IMR-90 (cell line): ENCODE measurements at regions of chr3 and their contacts with region 1.

Region 1: GRCh38 chr3:139329345-139329850 is 14.4 kb upstream of the MRPS22 start:
- DNase-seq: peak; percentile 63
- ATAC-seq: peak; percentile 99
- H3K4me3 ChIP-seq: no peak overlapping the region
- H3K27ac ChIP-seq: no peak overlapping the region
- H3K4me1 ChIP-seq: peaks cover 2% of the 10 kb centered on the region; the same call in 1 of the 2 replicates
- H3K27me3 ChIP-seq: peaks cover 18% of the 10 kb centered on the region
- CTCF ChIP-seq: peak; percentile 100
- POLR2A ChIP-seq: peak; percentile 62; the same call in 1 of the 2 replicates
- RAD21 ChIP-seq: peak; percentile 100

Region 2: DNA sequence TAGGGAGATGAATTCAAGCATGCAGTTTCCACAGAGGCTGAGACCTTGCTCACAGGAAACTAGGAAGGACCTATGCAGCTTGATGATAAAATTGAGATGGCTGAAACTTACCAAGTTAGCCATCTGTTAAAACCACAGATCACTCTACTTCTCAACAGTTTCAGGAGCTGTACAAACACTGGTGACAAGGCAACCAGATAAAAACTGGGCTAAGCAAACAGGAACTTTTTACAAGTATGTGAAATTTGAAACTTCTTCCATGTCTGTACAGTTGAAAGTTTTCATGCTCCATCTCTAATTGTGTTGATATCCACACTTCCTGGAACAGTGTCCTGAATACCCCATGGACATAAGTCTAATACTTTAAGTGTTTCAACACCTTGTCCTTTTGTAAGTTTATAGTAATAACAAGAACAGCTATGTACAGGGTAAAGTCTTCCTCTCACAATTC is 642.6 kb before region 1 on chr3:
- CTCF ChIA-PET with region 1: no interaction called
- POLR2A ChIA-PET with region 1: no interaction called
- dilution Hi-C with region 1: no loop called
- in situ Hi-C with region 1: loop called (anchors 25 kb)
- intact Hi-C with region 1: loop called (anchors 10 kb)
- DNase-seq: peak; percentile 89
- ATAC-seq: peak; percentile 88
- H3K4me3 ChIP-seq: no peak overlapping the region
- H3K27ac ChIP-seq: no peak overlapping the region
- H3K4me1 ChIP-seq: peaks cover 4% of the 10 kb centered on the region
- H3K27me3 ChIP-seq: no peaks in the 10 kb centered on the region
- CTCF ChIP-seq: no peak
- POLR2A ChIP-seq: no peak
- RAD21 ChIP-seq: no peak

Region 3: GRCh38 chr3:138694287-138695007 is 635.0 kb before region 1 on chr3:
- CTCF ChIA-PET with region 1: no interaction called
- POLR2A ChIA-PET with region 1: no interaction called
- dilution Hi-C with region 1: no loop called
- in situ Hi-C with region 1: loop called (anchors 25 kb)
- intact Hi-C with region 1: loop called (anchors 10 kb)
- DNase-seq: peak; percentile 99
- ATAC-seq: peak; percentile 96
- H3K4me3 ChIP-seq: no peak overlapping the region
- H3K27ac ChIP-seq: peak overlapping the region; percentile 61
- H3K4me1 ChIP-seq: peaks cover 4% of the 10 kb centered on the region
- H3K27me3 ChIP-seq: no peaks in the 10 kb centered on the region
- CTCF ChIP-seq: no peak
- POLR2A ChIP-seq: no peak
- RAD21 ChIP-seq: no peak

Region 4: DNA sequence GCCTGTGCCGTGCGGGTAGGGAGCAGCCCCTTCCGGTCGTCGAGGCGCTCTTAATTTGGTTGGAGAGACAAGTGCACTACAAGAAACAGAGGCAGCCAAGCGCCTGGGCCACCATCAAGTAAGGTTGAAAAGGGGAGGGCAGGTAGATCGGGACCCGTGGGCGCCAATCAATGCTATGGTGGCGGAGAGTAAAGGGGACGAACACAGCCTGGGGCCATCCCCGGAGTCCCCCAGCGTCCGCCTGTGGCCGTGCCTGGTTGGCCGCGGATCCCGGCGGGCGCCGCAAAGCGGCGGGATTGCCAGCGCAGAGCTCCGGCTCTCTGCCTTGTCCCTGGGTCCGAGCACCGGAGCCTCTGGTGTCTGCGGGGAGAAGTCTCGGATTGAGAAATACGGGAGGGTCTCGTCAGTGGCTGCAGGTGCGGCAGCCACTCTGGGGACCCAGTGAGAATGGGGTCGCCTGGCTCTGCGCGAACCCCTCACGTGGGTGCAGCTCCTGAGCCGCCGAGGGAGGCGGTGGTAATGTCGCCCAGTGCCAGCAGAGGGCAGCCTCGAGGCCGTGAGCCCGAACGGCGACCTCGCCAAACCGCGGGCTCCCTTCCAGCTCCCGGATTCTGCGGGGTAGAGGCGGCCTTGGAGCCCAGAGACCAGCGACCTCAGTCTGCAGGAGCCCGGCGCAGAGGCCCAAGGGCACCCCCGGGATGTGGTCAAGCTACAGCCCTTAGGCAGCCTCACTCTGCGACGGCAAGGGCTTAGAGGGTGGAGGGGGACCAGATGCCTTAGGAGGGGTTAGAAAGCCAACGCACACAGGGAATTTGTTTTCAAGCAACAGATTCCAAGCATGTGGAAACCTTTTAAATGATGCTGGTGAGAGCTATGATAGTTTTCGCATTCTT is 393.3 kb before region 1 on chr3:
- CTCF ChIA-PET with region 1: interaction called, 5 read pairs
- POLR2A ChIA-PET with region 1: no interaction called
- dilution Hi-C with region 1: no loop called
- in situ Hi-C with region 1: loop called (anchors 5 kb)
- intact Hi-C with region 1: loop called (anchors 1 kb)
- DNase-seq: peak; percentile 29
- ATAC-seq: peak; percentile 93
- H3K4me3 ChIP-seq: peak overlapping the region; percentile 41
- H3K27ac ChIP-seq: no peak overlapping the region
- H3K4me1 ChIP-seq: peaks cover 4% of the 10 kb centered on the region; the same call in 1 of the 2 replicates
- H3K27me3 ChIP-seq: peaks cover 79% of the 10 kb centered on the region
- CTCF ChIP-seq: peak; percentile 74
- POLR2A ChIP-seq: no peak
- RAD21 ChIP-seq: peak; percentile 55

Region 5: DNA sequence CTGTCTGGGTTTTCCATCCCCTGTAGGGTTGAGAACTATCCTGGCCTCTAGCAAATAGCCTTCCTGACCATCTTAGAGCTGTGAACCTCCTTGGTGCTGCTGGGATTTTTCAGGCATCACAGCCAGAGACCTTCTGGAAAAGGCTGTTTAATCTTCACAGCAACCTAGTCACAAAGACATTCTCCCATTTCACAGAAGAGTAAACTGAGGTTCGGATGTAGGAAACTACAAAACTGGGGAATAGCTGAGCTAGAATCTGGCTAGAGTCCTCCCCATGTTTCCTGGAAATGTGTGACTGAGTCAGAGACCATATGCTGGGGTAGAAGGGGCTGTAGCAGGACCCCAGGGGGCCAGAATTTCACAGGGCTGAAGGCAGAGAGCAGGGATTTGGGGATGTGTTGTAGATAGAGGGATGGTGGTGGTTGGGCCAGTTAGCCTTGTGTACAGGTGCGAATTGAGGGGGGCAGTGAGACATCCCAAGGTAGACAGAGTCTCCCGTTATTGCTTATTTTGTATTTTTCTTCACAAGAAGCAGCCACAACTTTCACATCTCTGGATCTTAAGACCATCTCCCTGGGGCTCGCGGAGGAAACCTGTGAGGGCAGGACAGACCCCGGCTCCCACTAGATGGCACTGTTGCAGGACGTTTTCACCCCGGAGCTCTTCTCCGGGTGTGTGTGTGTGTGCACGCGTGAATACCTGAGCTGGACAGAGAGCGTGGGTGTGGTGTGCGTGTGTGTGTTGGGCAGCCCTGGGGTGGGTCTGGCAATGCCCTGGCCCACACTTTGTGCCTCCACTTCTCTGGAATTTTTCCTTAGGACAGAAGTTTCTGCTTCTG is 217.8 kb before region 1 on chr3:
- CTCF ChIA-PET with region 1: interaction called, 45 read pairs
- POLR2A ChIA-PET with region 1: no interaction called
- dilution Hi-C with region 1: no loop called
- in situ Hi-C with region 1: loop called (anchors 5 kb)
- intact Hi-C with region 1: loop called (anchors 2 kb)
- DNase-seq: peak; percentile 55
- ATAC-seq: peak; percentile 93
- H3K4me3 ChIP-seq: no peak overlapping the region
- H3K27ac ChIP-seq: no peak overlapping the region
- H3K4me1 ChIP-seq: no peaks in the 10 kb centered on the region
- H3K27me3 ChIP-seq: peaks cover 34% of the 10 kb centered on the region
- CTCF ChIP-seq: peak; percentile 80
- POLR2A ChIP-seq: no peak
- RAD21 ChIP-seq: peak; percentile 75

Region 6: DNA sequence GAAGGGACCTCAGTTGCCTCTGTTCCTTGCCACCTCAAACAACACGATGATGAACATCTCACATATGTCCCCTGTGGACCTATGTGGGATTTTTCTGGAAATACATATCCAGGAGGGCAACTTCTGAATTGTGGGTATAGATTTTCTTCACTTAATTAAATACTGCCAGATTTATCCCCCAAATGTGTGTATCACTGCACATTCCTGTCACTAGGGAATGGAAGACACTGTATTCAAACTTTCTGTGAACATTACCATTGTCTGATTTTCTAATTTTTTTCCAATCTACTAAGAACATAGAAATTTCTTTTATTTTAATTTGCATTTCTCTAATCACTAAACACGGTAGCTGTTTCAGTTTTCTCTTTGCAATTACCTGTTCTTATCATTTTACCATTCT is 87.6 kb before region 1 on chr3:
- CTCF ChIA-PET with region 1: no interaction called
- POLR2A ChIA-PET with region 1: no interaction called
- dilution Hi-C with region 1: no loop called
- in situ Hi-C with region 1: no loop called
- intact Hi-C with region 1: loop called (anchors 10 kb)
- DNase-seq: no peak
- ATAC-seq: no peak
- H3K4me3 ChIP-seq: no peak overlapping the region
- H3K27ac ChIP-seq: no peak overlapping the region
- H3K4me1 ChIP-seq: no peaks in the 10 kb centered on the region
- H3K27me3 ChIP-seq: peaks cover 20% of the 10 kb centered on the region
- CTCF ChIP-seq: 0 out of 2 replicates have a peak, but pooled peaks have one; percentile 12
- POLR2A ChIP-seq: no peak
- RAD21 ChIP-seq: no peak

Region 7: GRCh38 chr3:139519998-139520737 is 190.8 kb after region 1 on chr3:
- CTCF ChIA-PET with region 1: no interaction called
- POLR2A ChIA-PET with region 1: no interaction called
- dilution Hi-C with region 1: no loop called
- in situ Hi-C with region 1: no loop called
- intact Hi-C with region 1: no loop called
- DNase-seq: peak; percentile 38
- ATAC-seq: no peak
- H3K4me3 ChIP-seq: no peak overlapping the region
- H3K27ac ChIP-seq: no peak overlapping the region
- H3K4me1 ChIP-seq: no peaks in the 10 kb centered on the region
- H3K27me3 ChIP-seq: no peaks in the 10 kb centered on the region
- CTCF ChIP-seq: peak; percentile 20; the same call in 1 of the 2 replicates
- POLR2A ChIP-seq: no peak
- RAD21 ChIP-seq: peak; percentile 20; the same call in 1 of the 2 replicates